Astrocyte of the spinal cord (primary cell): ENCODE measurements at regions of chr1 and their contacts with region 1.

Region 1: DNA sequence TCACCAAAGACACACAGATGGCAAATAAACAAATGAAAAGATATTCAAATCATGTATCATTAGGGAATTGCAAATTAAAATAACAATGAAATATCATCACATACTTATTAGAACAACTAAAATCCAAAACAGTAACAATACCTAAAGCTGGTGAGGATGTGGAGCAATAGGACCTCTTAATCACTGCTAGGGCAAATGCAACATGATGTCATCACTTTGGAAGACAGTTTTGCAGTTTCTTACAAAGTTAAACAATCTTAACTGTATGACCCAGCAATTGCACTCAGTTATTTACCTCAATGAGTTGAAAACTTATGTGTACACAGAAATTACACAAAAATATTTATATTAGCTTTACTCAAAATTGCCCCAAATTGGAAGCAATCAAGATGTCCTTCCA is 47.3 kb downstream of the SELENOF start:
- DNase-seq: peak; percentile 37
- H3K4me3 ChIP-seq: no peak overlapping the region
- CTCF ChIP-seq: no peak

Region 2: DNA sequence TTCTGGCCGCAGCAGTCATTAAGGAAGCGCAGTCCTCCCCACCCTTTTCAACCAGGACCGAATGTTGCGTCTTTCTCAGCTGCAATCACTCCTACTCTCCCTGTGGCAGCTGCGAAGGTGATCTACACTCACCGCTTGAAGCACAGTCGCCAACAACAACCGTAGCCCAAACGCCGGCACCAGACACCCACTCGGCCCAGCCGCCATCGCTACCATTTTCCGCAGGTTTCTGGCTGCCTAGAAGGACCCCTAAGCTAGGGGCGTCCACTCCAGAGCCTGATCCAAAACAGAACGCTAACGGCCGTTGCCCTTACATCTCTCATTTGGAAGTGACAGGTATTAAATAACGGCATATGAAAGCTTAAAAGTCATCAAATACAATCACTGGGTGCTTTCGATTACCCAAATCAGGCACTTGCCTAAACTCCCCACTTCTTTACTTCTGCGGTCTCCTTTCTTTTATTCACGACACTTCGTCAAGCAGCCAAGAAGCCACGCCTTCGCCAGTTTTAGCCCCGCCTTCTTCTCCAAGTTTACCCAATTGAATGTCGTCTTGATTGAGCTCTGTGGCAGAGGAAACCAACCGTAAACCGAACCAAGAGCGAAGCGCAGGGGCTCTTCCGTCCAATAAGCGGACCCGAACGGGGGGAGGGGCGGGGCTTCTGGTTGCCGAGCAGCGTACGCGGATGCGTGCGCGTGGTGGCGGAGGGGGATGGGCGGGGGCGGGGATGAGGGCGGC is 47.4 kb after region 1 on chr1 and contains the start of gene SELENOF:
- in situ Hi-C with region 1: loop called (anchors 10 kb)
- DNase-seq: peak; percentile 100
- H3K4me3 ChIP-seq: peak within 1 kb of the TSS; percentile 95
- CTCF ChIP-seq: no peak